Colonic mucosa (tissue), 4 donors: ENCODE measurements at regions of chr2 and their contacts with region 1.

Region 1: GRCh38 chr2:227125506-227125905 is 38.5 kb downstream of the COL4A4 start:
- DNase-seq: no peak
- H3K4me3 ChIP-seq: no peak overlapping the region
- H3K27ac ChIP-seq: no peak overlapping the region
- H3K4me1 ChIP-seq: no peaks in the 10 kb centered on the region
- H3K27me3 ChIP-seq: no peaks in the 10 kb centered on the region
- CTCF ChIP-seq: no peak

Region 2: GRCh38 chr2:227191367-227191766 is 65.9 kb after region 1 on chr2:
- intact Hi-C with region 1: no loop called
- DNase-seq: no peak
- H3K4me3 ChIP-seq: no peak overlapping the region
- H3K27ac ChIP-seq: no peak overlapping the region
- H3K4me1 ChIP-seq: no peaks in the 10 kb centered on the region
- H3K27me3 ChIP-seq: no peaks in the 10 kb centered on the region
- CTCF ChIP-seq: no peak

Region 3: GRCh38 chr2:227237786-227238185 is 112.3 kb after region 1 on chr2:
- intact Hi-C with region 1: loop called (anchors 2 kb)
- DNase-seq: no peak
- H3K4me3 ChIP-seq: no peak overlapping the region
- H3K27ac ChIP-seq: no peak overlapping the region
- H3K4me1 ChIP-seq: no peaks in the 10 kb centered on the region
- H3K27me3 ChIP-seq: no peaks in the 10 kb centered on the region
- CTCF ChIP-seq: no peak